ENCODE measurements at regions of chr10 and their contacts with region 1.

Region 1: DNA sequence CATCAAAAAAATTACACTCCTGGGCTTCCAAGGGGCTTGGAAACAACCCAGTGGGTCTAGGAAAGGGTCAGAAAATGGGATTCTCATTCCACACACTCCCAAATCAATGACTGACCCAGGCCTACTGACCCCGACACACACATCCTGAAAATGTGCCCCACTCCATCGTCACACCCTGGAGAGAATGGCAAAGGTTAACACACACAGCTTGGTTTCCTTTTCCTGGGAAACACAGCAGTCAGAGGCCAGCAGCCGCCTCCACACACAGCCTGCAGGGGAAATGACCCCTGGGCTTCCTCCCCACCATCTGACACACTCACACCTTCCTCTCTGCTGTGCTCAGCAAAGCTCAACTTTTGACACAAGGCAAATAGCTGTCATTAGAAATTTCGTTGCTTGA is 42.9 kb downstream of the SH3PXD2A start:
- DNase-seq: peak; percentile 92
- H3K4me3 ChIP-seq: no peak overlapping the region
- H3K27ac ChIP-seq: peak overlapping the region; percentile 75
- H3K4me1 ChIP-seq: peaks cover 30% of the 10 kb centered on the region
- H3K27me3 ChIP-seq: no peaks in the 10 kb centered on the region
- CTCF ChIP-seq: no peak
- POLR2A ChIP-seq: peak; percentile 62

Region 2: DNA sequence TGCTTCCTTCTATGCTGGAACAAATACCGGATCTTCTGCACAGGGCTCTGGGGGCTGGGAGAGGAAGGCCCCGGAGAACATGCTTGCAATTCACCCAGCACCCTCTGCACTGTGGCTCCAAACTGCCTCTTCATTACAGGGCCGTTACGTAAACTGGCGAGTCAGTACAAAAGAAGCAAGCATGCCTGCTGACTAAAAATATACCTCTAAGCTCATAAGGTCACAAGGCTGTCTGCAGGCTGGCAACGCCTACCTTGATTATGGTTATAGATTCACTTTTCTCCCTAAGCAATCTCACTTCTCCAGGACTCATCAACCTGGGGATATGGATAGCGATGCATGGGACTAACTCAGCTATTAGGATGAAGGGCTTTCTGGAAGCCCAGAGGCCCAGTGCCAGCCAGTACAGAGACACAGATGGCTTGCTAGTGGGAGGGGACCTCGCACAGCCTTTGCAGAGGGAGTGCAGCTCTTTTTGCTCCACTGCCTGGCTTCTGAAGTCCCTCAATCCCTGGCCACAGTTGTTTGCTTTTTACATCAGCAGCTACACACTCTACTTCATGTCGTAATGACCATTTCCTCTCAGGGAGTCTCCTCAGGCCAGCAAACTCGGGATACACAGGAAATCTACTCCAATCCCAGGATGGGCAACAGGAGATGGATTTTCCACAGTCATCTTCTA is 53.2 kb before region 1 on chr10:
- CTCF ChIA-PET with region 1: interaction called, 5 read pairs
- POLR2A ChIA-PET with region 1: interaction called, 5 read pairs
- dilution Hi-C with region 1: no loop called
- intact Hi-C with region 1: loop called (anchors 2 kb)
- DNase-seq: peak; percentile 78
- H3K4me3 ChIP-seq: no peak overlapping the region
- H3K27ac ChIP-seq: peak overlapping the region; percentile 59
- H3K4me1 ChIP-seq: peaks cover 60% of the 10 kb centered on the region
- H3K27me3 ChIP-seq: no peaks in the 10 kb centered on the region
- CTCF ChIP-seq: no peak
- POLR2A ChIP-seq: no peak

Region 3: GRCh38 chr10:103781329-103782061 is 30.9 kb before region 1 on chr10:
- CTCF ChIA-PET with region 1: interaction called, 5 read pairs
- POLR2A ChIA-PET with region 1: no interaction called
- dilution Hi-C with region 1: no loop called
- intact Hi-C with region 1: loop called (anchors 2 kb)
- DNase-seq: peak; percentile 22
- H3K4me3 ChIP-seq: no peak overlapping the region
- H3K27ac ChIP-seq: no peak overlapping the region
- H3K4me1 ChIP-seq: no peaks in the 10 kb centered on the region
- H3K27me3 ChIP-seq: no peaks in the 10 kb centered on the region
- CTCF ChIP-seq: peak; percentile 12 to 21
- POLR2A ChIP-seq: no peak

Region 4: DNA sequence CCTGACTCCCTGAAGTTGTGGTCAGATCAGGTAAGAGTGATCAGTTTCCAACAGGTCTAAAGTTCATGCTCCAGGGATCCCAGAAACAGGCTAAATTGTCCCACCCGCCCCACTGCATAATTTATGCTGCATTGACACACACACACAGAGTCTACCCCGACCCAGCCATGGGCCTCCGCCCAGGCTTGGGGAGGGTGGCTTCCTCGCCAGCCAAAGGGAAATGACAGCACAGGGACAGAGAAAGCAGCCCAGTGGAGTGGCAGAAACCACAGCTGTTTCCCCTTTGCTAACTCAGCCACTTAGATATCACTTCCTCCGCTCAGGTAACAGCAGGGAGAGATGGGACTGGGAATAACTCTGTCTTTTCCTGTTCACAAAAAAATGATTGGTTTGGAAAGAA is 33.5 kb after region 1 on chr10:
- CTCF ChIA-PET with region 1: interaction called, 26 read pairs
- POLR2A ChIA-PET with region 1: no interaction called
- dilution Hi-C with region 1: no loop called
- intact Hi-C with region 1: no loop called
- DNase-seq: peak; percentile 34
- H3K4me3 ChIP-seq: no peak overlapping the region
- H3K27ac ChIP-seq: peak overlapping the region; percentile 23
- H3K4me1 ChIP-seq: peaks cover 28% of the 10 kb centered on the region
- H3K27me3 ChIP-seq: no peaks in the 10 kb centered on the region
- CTCF ChIP-seq: no peak
- POLR2A ChIP-seq: no peak

Region 5: DNA sequence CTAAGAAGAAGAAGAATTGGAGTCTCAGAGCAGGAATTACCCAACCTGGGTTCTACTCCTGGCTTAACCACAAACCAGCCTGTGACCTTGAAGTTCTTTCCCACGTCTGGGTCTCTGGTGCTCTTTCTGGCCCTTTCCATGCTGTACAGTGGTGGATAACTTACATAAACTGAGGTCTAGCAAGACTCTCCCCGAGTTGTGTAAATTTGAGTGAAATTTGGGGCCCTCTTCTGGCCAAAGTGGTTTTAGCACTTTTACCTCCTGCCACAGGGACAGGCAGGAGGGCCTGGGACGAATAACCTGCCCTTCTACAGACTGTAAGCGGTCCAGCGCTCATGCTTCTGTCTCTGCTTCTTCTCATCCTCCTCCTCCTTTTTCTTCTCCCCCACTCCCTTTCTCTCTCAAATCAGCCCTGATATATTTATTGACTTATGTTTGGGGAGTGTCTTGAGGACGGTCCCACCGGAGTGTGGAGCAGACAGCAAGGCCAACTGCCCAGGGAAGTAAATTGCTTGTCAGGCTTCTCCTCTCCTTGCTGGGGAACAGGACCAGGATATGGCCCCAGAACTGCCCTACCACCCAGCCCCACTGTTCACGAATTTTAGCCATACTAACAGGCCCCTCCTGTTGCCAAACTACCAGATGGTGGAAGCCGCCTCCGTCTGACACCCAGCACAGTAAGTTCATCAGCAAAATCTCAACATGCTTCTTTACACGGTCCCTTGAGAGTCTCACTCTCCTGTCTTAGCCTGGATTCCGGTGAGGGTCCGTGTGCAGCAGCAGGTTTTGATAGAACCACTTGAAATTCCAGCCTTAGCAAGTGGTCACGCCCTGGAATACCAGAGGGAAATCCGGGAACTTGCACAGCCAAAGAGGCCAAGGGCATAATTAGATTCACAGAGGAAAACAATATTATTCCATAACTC is 47.0 kb after region 1 on chr10:
- CTCF ChIA-PET with region 1: interaction called, 39 read pairs
- POLR2A ChIA-PET with region 1: no interaction called
- dilution Hi-C with region 1: no loop called
- intact Hi-C with region 1: loop called (anchors 2 kb)
- DNase-seq: peak; percentile 78
- H3K4me3 ChIP-seq: no peak overlapping the region
- H3K27ac ChIP-seq: no peak overlapping the region
- H3K4me1 ChIP-seq: peaks cover 9% of the 10 kb centered on the region
- H3K27me3 ChIP-seq: no peaks in the 10 kb centered on the region
- CTCF ChIP-seq: peak; percentile 64 to 69
- POLR2A ChIP-seq: no peak